ENCODE measurements at regions of chr7 and their contacts with region 1.

Region 1: GRCh38 chr7:28062197-28062991 is 118.2 kb downstream of the JAZF1 start:
- DNase-seq: peak; percentile 49 to 65
- ATAC-seq: peak; percentile 93 to 96 (median 95)
- H3K4me3 ChIP-seq: no peak overlapping the region
- H3K4me3 Mint-ChIP-seq: no peak overlapping the region
- H3K27ac ChIP-seq: no peak overlapping the region
- H3K27ac Mint-ChIP-seq: peak overlapping the region in 1 of 2 donors; percentile 37
- H3K4me1 ChIP-seq: peaks cover 5% of the 10 kb centered on the region
- H3K4me1 Mint-ChIP-seq: peaks cover 50 to 51% of the 10 kb centered on the region in 2 donors
- H3K27me3 ChIP-seq: no peaks in the 10 kb centered on the region
- H3K27me3 Mint-ChIP-seq: no peaks in the 10 kb centered on the region
- CTCF ChIP-seq: peak; percentile 74

Region 2: GRCh38 chr7:28078036-28078901 is 15.9 kb after region 1 on chr7:
- intact Hi-C with region 1: loop called (anchors 2 kb)
- DNase-seq: peak in 1 of 2 donors; percentile 75
- ATAC-seq: peak; percentile 86 to 97 (median 88)
- H3K4me3 ChIP-seq: no peak overlapping the region
- H3K4me3 Mint-ChIP-seq: no peak overlapping the region
- H3K27ac ChIP-seq: no peak overlapping the region
- H3K27ac Mint-ChIP-seq: peak overlapping the region in 1 of 2 donors; percentile 20
- H3K4me1 ChIP-seq: peaks cover 18% of the 10 kb centered on the region
- H3K4me1 Mint-ChIP-seq: peaks cover 70 to 74% of the 10 kb centered on the region in 2 donors
- H3K27me3 ChIP-seq: no peaks in the 10 kb centered on the region
- H3K27me3 Mint-ChIP-seq: no peaks in the 10 kb centered on the region
- CTCF ChIP-seq: peak; percentile 97

Region 3: DNA sequence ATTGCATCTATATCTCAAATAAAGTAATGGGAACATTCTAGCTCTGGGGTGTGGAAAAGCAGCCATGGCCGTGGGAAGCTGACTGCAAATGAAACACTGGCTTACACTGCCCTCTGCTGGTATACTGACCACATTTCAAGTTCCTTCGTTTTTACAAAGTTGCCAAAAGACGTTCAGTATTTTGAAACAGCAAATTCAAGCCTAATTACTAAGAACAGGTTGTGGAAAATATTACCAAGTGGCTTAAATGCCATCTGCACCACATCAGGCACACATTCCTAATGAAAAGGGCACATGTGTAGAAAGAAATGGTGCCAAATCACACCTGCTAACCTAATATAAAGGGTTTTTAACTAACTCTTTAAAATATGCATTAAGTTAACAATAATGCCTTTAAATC is 34.3 kb after region 1 on chr7:
- intact Hi-C with region 1: loop called (anchors 5 kb)
- DNase-seq: peak; percentile 23 to 77
- ATAC-seq: peak; percentile 74 to 78 (median 77)
- H3K4me3 ChIP-seq: no peak overlapping the region
- H3K4me3 Mint-ChIP-seq: no peak overlapping the region
- H3K27ac ChIP-seq: no peak overlapping the region
- H3K27ac Mint-ChIP-seq: peak overlapping the region; percentile 26 to 64
- H3K4me1 ChIP-seq: peaks cover 3% of the 10 kb centered on the region
- H3K4me1 Mint-ChIP-seq: peaks cover 36 to 45% of the 10 kb centered on the region in 2 donors
- H3K27me3 ChIP-seq: no peaks in the 10 kb centered on the region
- H3K27me3 Mint-ChIP-seq: no peaks in the 10 kb centered on the region
- CTCF ChIP-seq: peak; percentile 96

Region 4: GRCh38 chr7:28125431-28126409 is 63.3 kb after region 1 on chr7:
- intact Hi-C with region 1: no loop called
- DNase-seq: no peak
- ATAC-seq: no peak
- H3K4me3 ChIP-seq: no peak overlapping the region
- H3K4me3 Mint-ChIP-seq: no peak overlapping the region
- H3K27ac ChIP-seq: no peak overlapping the region
- H3K27ac Mint-ChIP-seq: peak overlapping the region; percentile 20 to 71
- H3K4me1 ChIP-seq: peaks cover 27% of the 10 kb centered on the region
- H3K4me1 Mint-ChIP-seq: peaks cover 83 to 87% of the 10 kb centered on the region in 2 donors
- H3K27me3 ChIP-seq: no peaks in the 10 kb centered on the region
- H3K27me3 Mint-ChIP-seq: no peaks in the 10 kb centered on the region
- CTCF ChIP-seq: no peak

Measured in natural killer cell (primary cell).